HEK293 (cell line): ENCODE measurements at regions of chr3 and their contacts with region 1.

Region 1: GRCh38 chr3:30693470-30694120 is 87.2 kb downstream of the TGFBR2 start:
- H3K4me3 ChIP-seq: no peak overlapping the region
- H3K27ac ChIP-seq: no peak overlapping the region
- H3K4me1 ChIP-seq: peaks cover 4% of the 10 kb centered on the region; the same call in 1 of the 2 replicates
- CTCF ChIP-seq: peak; percentile 39; the same call in 1 of the 2 replicates

Region 2: GRCh38 chr3:30020380-30020779 is 673.2 kb before region 1 on chr3:
- CTCF ChIA-PET with region 1: interaction called, 10 read pairs
- POLR2A ChIA-PET with region 1: no interaction called
- H3K4me3 ChIP-seq: no peak overlapping the region
- H3K27ac ChIP-seq: no peak overlapping the region
- H3K4me1 ChIP-seq: no peaks in the 10 kb centered on the region
- CTCF ChIP-seq: no peak